ENCODE measurements at regions of chr21 and their contacts with region 1.

Region 1: DNA sequence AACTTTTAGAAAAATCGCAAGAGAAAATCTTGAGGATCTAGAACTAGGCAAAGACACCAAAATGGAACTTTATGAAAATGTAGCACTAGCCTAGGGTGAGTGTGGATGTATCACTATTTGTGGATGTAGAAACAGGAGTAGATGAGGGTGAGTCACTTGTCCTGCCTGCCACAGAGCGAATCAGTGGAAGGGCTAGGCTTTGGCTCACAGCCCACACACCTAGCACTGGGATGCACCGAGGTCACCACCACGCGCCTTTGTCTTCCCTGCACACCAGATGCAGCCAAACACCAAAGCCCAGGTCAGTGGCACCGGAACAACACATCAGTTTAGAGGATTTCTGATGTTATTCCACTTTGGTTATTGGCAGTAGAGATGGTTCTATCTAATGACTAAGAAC is 38.2 kb downstream of the PKNOX1 start:
- DNase-seq: no peak
- ATAC-seq: no peak
- H3K4me3 ChIP-seq: no peak overlapping the region
- H3K27ac ChIP-seq: no peak overlapping the region
- H3K4me1 ChIP-seq: no peaks in the 10 kb centered on the region
- H3K27me3 ChIP-seq: no peaks in the 10 kb centered on the region
- CTCF ChIP-seq: no peak
- EP300 ChIP-seq: no peak
- POLR2A ChIP-seq: no peak
- RAD21 ChIP-seq: no peak

Region 2: DNA sequence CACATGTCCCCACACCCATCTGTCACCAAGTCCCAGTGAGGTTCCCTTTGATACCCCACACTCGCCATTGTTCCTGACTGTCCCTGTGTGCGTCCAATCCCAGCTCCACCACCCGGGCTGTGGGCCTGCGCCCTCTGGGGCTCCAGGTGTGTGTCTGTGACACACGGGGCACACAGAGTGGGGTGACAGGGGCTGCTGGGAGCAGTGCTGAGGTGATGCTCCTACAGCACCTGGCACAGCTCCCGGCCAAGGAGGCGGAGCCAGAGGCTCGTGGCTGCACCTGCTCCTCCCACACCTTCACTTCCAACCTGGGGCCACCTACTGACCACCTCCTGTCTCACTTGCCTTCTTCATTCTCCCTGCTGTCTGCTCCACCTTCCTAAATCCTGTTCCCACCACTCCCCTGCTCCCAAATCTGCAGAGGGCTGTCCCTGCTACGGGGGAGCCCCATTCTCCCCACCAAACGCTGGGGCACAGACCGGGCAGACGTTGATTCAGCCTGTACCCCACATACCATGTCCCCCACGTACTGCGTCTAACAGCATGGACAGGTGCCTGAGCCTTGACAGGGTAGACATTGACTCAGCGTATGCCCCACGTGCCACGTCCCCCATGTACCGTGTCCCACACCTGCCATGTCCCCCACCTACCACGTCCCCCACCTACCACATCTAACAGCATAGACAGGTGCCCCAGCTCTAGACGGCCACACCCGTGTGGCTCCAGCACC is 149.7 kb before region 1 on chr21:
- CTCF ChIA-PET with region 1: no interaction called
- POLR2A ChIA-PET with region 1: no interaction called
- in situ Hi-C with region 1: no loop called
- intact Hi-C with region 1: loop called (anchors 5 kb)
- DNase-seq: no peak
- ATAC-seq: peak; percentile 24
- H3K4me3 ChIP-seq: no peak overlapping the region
- H3K27ac ChIP-seq: no peak overlapping the region
- H3K4me1 ChIP-seq: no peaks in the 10 kb centered on the region
- H3K27me3 ChIP-seq: no peaks in the 10 kb centered on the region
- CTCF ChIP-seq: no peak
- EP300 ChIP-seq: no peak
- POLR2A ChIP-seq: no peak
- RAD21 ChIP-seq: no peak

Region 3: DNA sequence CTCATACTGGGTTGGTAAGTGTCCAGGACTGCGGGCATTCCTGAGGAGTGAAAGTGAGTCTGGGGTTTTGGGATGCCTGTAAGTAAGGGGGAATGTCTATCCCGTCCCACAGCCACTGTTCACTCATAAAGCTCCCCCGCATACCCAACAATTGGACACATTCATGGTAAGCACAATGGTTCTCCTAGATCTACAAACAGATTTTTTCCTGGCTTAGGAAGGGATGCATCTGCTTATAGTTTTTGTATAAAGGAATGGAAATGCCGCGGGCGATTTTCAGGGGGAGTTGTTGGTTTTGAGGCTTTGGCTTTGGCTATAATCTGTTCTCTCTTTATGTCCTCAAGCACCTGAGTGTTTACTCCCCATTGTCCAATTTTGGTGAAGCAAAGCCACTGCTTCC is 94.3 kb before region 1 on chr21:
- CTCF ChIA-PET with region 1: no interaction called
- POLR2A ChIA-PET with region 1: no interaction called
- in situ Hi-C with region 1: no loop called
- intact Hi-C with region 1: no loop called
- DNase-seq: no peak
- ATAC-seq: no peak
- H3K4me3 ChIP-seq: no peak overlapping the region
- H3K27ac ChIP-seq: no peak overlapping the region
- H3K4me1 ChIP-seq: peaks cover under 1% of the 10 kb centered on the region; the same call in 1 of the 2 replicates
- H3K27me3 ChIP-seq: peaks cover 0 to 1% of the 10 kb centered on the region in 2 experiments; a peak in 2 of 5 replicates
- CTCF ChIP-seq: no peak
- EP300 ChIP-seq: no peak
- POLR2A ChIP-seq: no peak
- RAD21 ChIP-seq: no peak